ENCODE measurements at regions of chr3 and their contacts with region 1.

Region 1: DNA sequence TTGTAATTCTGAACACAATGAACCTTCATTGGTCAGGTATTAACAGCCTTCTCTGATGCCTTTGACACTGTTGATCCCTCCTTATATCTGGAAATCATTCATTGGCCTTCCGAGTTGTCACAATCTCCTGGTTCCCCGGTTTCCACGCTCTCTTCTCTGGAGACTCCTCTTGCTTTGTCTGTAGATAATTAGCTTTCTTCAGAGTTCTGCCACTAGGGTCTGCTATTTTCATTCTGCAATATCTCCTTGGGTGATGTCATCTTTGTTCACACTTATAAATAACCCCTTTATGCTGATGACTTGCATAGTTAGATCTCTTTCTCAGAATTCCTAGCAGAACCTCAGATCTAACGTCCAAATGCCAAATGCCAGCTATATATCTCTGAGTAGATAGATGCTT is 583.8 kb upstream of the ZNF717 start:
- DNase-seq: peak; percentile 44
- H3K4me3 ChIP-seq: no peak overlapping the region
- H3K27ac ChIP-seq: no peak overlapping the region
- H3K4me1 ChIP-seq: no peaks in the 10 kb centered on the region
- H3K27me3 ChIP-seq: no peaks in the 10 kb centered on the region
- CTCF ChIP-seq: peak; percentile 50

Region 2: DNA sequence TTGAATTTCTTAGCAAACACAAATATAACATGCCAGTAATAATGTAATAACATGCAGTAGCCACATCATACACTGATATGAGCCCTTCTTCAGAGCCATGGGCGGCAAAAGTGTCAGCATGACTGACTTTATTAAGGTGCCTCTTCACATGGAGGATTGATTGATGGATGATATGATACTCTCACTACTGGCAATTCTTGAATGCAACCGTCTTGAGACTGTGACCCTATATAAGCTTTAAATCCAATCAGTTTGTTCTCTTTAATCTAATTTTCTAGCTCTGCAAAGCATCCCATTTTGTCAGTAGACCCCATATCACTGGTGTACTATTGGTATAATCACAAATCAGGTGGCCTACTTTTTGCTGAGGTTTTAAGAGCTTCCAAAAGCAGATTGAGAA is 207.0 kb after region 1 on chr3:
- CTCF ChIA-PET with region 1: no interaction called
- POLR2A ChIA-PET with region 1: no interaction called
- intact Hi-C with region 1: loop called (anchors 5 kb)
- DNase-seq: no peak
- H3K4me3 ChIP-seq: no peak overlapping the region
- H3K27ac ChIP-seq: no peak overlapping the region
- H3K4me1 ChIP-seq: no peaks in the 10 kb centered on the region
- H3K27me3 ChIP-seq: no peaks in the 10 kb centered on the region
- CTCF ChIP-seq: no peak